ENCODE measurements at regions of chr10 and their contacts with region 1.

Region 1: DNA sequence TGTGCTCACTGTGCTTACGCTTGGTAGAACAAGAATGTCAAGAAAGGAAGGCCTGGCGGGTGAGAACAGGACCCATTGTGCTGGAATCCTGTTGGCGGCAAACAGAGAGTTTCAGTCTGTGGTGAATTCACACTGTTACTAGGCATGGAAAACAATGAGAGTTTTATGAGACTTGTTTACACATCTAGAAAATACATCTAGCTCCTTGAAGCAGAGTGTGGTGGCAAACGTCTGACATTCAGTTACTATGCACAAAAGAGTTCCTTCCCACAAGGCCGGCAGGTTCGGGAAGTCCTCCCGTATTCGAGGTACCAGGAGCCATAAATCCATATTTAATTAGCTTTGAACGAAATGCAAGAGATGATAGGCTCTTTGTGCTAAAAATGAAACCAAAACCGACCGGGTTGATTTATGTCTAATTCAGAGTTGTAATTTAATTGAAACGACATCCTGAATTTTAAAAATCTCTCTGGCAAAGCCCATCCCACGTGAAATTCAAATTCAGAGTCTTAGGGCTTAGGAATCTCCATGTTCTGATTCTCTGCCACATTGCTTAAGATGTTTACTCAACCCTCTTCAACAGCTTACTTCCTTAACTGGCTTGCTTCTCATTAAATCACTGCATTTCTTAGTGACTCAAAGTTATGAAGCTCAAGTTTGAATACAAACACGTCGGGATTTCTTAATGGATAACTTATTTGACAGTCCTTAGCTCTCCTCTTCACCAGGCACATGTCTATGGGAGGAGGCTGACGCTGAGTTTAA is 299.9 kb upstream of the PITRM1 start:
- DNase-seq: no peak

Region 2: DNA sequence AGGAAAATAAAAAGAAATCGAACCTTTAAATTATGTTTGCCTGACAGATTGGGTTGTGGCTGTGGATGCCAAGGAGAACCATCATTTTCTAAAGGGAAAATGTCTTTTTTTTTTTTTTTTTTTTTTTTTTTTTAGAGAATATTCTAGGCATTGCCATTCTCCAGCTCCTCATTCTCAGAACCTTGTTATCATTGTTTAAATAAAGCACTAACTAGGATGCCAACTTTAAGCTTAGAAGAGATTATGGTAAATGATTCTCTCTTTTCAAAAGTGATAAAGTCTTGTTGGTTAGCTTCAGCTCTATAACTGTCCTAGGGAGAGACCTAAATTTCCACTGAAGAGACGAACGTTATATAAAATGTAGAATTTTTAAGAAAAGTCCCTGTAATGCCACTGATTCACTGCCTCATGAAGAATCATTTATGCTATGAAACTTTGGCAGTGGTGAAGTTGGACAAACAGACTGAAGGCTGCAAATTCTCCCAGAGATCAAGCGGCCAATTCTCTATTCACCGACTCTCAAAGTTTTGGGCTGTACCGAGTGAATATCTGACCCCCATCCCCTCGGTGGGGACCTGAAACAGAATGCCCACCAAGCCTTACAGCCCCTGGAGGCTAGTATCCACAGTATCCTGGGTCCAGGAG is 91.9 kb before region 1 on chr10:
- intact Hi-C with region 1: no loop called
- DNase-seq: no peak

Region 3: DNA sequence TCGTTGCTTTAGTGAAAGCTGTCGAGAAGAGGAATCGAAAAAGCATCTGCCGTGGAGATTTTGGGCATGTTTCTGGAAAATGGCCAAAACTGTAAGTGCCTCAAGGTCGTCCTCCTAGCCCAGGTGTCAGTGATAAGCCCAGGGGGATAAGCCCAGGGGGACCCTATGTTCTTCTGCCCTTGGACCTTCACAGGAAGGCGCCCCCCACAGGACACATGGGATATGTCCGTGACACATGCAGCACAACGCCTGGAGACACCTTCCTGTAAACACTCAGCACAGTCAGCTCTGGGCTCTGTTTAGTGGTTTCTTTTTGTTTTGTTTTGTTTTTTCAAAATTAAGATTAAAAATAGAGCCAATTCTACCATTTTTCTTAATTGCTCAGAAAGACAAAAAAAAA is 39.8 kb after region 1 on chr10:
- intact Hi-C with region 1: no loop called
- DNase-seq: no peak

Region 4: DNA sequence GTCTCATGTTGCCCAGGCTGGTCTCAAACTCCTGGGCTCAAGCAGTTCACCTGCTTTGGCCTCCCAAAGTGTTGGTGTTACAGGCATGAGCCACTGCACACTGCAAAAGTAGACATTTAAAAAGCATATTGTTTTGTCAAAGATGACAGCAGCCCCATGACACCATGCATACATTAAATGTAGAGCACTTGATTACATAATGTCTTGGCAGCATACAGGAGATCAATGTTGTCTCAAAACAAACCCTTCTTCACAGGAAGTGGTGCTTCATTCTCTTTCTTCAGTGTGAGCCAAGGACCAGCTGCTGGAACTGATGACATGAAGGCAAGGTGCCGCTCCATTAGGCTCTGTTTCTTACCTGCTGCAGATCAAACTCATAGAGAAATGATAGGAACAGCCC is 94.2 kb after region 1 on chr10:
- intact Hi-C with region 1: no loop called
- DNase-seq: no peak

Region 5: GRCh38 chr10:4541292-4541691 is 1068.8 kb after region 1 on chr10:
- intact Hi-C with region 1: loop called in 1 of 2 experiments (anchors 5 kb)
- DNase-seq: no peak